ENCODE measurements at regions of chr3 and their contacts with region 1.

Region 1: DNA sequence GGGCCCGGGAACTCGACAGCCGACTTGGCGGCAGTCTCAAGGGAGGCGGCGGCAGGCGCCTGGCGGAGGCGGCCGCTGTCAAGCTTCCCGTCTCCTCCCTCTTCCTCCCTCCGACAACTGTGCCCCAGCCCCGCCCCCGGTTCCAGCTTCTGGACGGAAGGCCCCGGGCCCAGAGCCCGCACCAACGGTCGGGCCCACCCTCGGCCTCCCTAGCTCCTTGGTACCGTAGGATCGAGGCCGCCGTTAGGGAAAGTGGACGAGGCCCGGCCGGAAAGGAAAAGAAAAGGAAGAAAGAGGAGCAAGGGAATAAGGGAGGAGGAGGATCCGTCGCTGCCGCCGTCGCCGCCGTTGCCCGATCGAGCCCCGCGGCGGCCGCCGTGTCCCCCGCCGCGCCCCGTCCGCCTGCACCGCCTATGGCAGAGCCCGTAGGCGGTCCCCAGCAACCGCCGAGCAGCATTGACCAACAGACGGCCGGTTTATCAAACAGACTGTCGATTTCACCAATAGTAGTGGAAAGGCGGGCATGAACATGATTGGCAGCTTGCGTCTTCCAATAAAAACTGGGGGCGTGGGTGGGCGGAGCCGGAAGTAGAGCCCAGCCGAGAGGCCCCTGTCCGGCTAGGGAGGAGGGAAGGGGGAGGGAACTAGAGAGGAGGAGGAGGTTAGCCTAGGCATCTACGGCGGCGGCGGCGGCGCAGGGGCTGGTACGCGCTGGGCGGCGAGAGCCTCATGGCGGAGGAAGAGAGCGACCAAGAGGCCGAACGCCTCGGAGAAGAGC is at the starts of genes CGGBP1 and ZNF654:
- DNase-seq: peak; percentile 98
- ATAC-seq: peak; percentile 91
- H3K4me3 Mint-ChIP-seq: peak within 1 kb of the TSS; percentile 97
- H3K27ac Mint-ChIP-seq: peak within 1 kb of the TSS; percentile 97
- H3K4me1 Mint-ChIP-seq: peaks cover 58% of the 10 kb centered on the region
- H3K27me3 Mint-ChIP-seq: no peaks in the 10 kb centered on the region
- CTCF ChIP-seq: no peak
- total RNA-seq, gene CGGBP1: 84.6 and 90.8 TPM in 2 replicates
- total RNA-seq, gene ZNF654: 11.2 and 13.6 TPM in 2 replicates

Region 2: DNA sequence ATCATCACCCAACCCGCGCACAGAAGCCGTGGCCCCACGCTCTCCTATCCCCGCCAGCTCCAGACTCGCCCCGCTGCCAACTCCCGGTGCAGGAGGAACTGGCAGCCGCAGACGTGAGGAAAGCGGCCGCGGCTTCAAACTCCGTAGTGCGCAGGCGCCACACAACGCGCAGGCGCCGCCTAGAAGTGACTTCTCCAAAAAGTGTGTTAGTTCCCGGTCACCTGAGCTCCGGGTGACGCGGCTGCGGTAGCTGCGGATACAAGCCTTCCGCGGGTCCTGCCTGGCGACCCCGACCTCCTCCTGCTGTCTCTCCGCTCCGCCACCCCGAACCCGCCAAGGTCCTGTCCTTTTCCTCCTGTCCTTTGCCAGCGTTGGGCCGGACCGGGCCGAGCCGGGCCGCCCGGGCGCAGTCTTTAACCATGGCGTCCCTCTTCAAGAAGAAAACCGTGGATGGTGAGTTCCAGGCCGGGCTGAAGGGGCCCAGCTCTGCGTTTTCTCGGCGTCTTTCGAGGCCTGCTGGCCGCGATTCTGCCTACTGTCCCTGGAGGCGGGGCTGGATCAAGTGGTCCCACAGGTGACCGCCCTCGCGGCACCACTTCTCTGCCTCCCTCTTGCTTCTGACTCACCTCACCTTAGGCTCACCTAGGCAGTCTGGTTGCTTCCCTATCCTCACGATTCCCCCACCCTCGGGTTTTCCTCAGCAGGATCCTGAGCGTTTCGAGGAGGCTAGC is 831.5 kb before region 1 on chr3 and contains the start of gene CHMP2B:
- CTCF ChIA-PET with region 1: no interaction called
- POLR2A ChIA-PET with region 1: interaction called, 7 read pairs
- intact Hi-C with region 1: loop called (anchors 1 kb)
- DNase-seq: peak; percentile 92
- ATAC-seq: peak; percentile 90
- H3K4me3 Mint-ChIP-seq: peak within 1 kb of the TSS; percentile 99
- H3K27ac Mint-ChIP-seq: peak within 1 kb of the TSS; percentile 97
- H3K4me1 Mint-ChIP-seq: peaks cover 49% of the 10 kb centered on the region
- H3K27me3 Mint-ChIP-seq: peaks cover 7% of the 10 kb centered on the region
- CTCF ChIP-seq: no peak
- total RNA-seq, gene CHMP2B: 21.7 and 26.8 TPM in 2 replicates

Region 3: GRCh38 chr3:87997298-87997697 is 61.5 kb before region 1 on chr3:
- CTCF ChIA-PET with region 1: no interaction called
- POLR2A ChIA-PET with region 1: no interaction called
- intact Hi-C with region 1: loop called (anchors 2 kb)
- DNase-seq: no peak
- ATAC-seq: peak; percentile 77
- H3K4me3 Mint-ChIP-seq: peak overlapping the region; percentile 75
- H3K27ac Mint-ChIP-seq: peak overlapping the region; percentile 79
- H3K4me1 Mint-ChIP-seq: peaks cover 33% of the 10 kb centered on the region
- H3K27me3 Mint-ChIP-seq: no peaks in the 10 kb centered on the region
- CTCF ChIP-seq: no peak

Region 4: GRCh38 chr3:88031642-88032077 is 27.1 kb before region 1 on chr3:
- CTCF ChIA-PET with region 1: interaction called, 3 read pairs
- POLR2A ChIA-PET with region 1: interaction called, 28 read pairs
- intact Hi-C with region 1: loop called (anchors 1 kb)
- DNase-seq: no peak
- ATAC-seq: peak; percentile 89
- H3K4me3 Mint-ChIP-seq: peak overlapping the region; percentile 84
- H3K27ac Mint-ChIP-seq: peak overlapping the region; percentile 81
- H3K4me1 Mint-ChIP-seq: peaks cover 41% of the 10 kb centered on the region
- H3K27me3 Mint-ChIP-seq: no peaks in the 10 kb centered on the region
- CTCF ChIP-seq: no peak

Region 5: GRCh38 chr3:88078930-88079329 is 20.1 kb after region 1 on chr3:
- CTCF ChIA-PET with region 1: no interaction called
- POLR2A ChIA-PET with region 1: interaction called, 3 read pairs
- intact Hi-C with region 1: loop called (anchors 2 kb)
- DNase-seq: no peak
- ATAC-seq: no peak
- H3K4me3 Mint-ChIP-seq: no peak overlapping the region
- H3K27ac Mint-ChIP-seq: no peak overlapping the region
- H3K4me1 Mint-ChIP-seq: peaks cover 37% of the 10 kb centered on the region
- H3K27me3 Mint-ChIP-seq: no peaks in the 10 kb centered on the region
- CTCF ChIP-seq: no peak

Measured in activated B cell treated with CpG ODN at 0.5 μM for 24 hours (primary cell).